ENCODE measurements at regions of chr2 and their contacts with region 1.

Region 1: DNA sequence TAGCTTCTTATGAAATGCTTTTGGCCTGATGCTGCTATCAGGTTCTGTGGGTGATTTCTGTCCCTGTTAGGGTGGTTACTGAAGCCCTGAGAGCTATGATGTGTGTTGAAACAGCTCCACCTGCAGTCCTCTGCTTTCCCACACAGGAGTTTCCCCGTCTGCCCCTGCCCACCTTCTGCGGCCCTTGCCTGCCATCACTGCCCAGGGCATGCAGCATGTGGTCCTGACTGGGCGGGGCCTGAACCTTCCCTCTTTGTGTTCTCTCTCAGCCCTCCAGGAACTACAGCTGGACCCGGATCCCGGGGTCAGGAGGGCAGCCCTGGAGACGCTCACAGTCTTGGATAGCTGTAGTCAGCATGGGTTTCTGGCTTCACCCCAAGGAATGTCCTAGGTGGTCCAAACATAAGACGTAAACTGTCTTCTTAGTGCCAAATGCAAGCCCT is 21.4 kb downstream of the HJURP start:
- DNase-seq: peak; percentile 93 to 97
- ATAC-seq: peak; percentile 83 to 92
- H3K4me3 ChIP-seq: no peak overlapping the region
- H3K27ac ChIP-seq: peak overlapping the region; percentile 91 to 93
- H3K4me1 ChIP-seq: peaks cover 73% of the 10 kb centered on the region
- CTCF ChIP-seq: peak; percentile 89
- EP300 ChIP-seq: peak; percentile 19 to 53; a peak in 2 of 5 replicates
- POLR2A ChIP-seq: no peak
- RAD21 ChIP-seq: peak; percentile 92 to 99

Region 2: DNA sequence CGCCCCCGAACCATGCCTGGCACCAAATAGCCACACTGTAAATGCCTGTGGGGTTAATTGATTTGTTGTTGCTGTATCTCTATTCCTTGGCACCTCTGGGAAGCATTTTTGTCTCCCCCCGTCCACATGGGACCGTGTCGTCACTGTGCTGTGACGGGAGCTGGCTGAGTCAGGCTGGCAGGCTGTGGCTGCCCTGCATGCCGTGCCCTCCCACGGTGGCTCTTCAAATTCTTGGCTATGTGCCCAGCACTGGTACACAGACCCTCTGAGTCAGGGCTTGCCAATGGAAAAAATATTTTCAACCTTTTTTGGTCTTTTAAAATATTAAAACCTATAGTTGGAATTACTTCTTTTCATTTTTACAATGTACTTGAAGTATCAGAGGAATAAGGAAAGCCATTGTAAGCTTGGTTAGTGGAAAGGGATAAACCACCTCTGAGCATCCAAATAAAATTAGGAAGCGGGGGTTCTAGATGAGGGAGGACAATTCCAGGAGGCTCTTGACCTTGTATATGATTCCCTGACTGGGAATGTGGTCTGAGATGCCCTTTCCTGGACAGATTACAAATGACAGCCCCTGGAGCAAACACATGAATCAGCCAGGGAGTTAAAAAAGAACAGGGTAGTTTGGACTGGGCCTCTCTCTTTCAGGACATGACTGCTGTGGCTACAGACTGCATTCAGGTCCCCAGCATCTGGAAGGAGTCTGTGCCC is 419.2 kb before region 1 on chr2:
- CTCF ChIA-PET with region 1: interaction called, 20 read pairs
- POLR2A ChIA-PET with region 1: interaction called, 4 read pairs
- DNase-seq: peak; percentile 87 to 96
- ATAC-seq: peak; percentile 77 to 84
- H3K4me3 ChIP-seq: peak overlapping the region; percentile 32
- H3K27ac ChIP-seq: peak overlapping the region; percentile 95 to 99
- H3K4me1 ChIP-seq: peaks cover 77% of the 10 kb centered on the region
- CTCF ChIP-seq: no peak
- EP300 ChIP-seq: peak; percentile 79 to 90; a peak in 4 of 5 replicates
- POLR2A ChIP-seq: no peak
- RAD21 ChIP-seq: no peak

Region 3: GRCh38 chr2:233449081-233449901 is 383.6 kb before region 1 on chr2:
- CTCF ChIA-PET with region 1: interaction called, 83 read pairs
- POLR2A ChIA-PET with region 1: interaction called, 11 read pairs
- DNase-seq: peak; percentile 68 to 77
- ATAC-seq: peak; percentile 67 to 74
- H3K4me3 ChIP-seq: no peak overlapping the region
- H3K27ac ChIP-seq: peak overlapping the region; percentile 93 to 94
- H3K4me1 ChIP-seq: peaks cover 62% of the 10 kb centered on the region
- CTCF ChIP-seq: peak; percentile 65
- EP300 ChIP-seq: no peak
- POLR2A ChIP-seq: no peak
- RAD21 ChIP-seq: peak; percentile 74 to 79

Region 4: GRCh38 chr2:233476651-233477547 is 356.0 kb before region 1 on chr2:
- CTCF ChIA-PET with region 1: interaction called, 12 read pairs
- POLR2A ChIA-PET with region 1: no interaction called
- DNase-seq: no peak
- ATAC-seq: peak in 1 of 2 experiments; percentile 2; a peak in 2 of 6 replicates
- H3K4me3 ChIP-seq: no peak overlapping the region
- H3K27ac ChIP-seq: peak overlapping the region; percentile 43 to 98; a peak in 4 of 6 replicates
- H3K4me1 ChIP-seq: peaks cover 12% of the 10 kb centered on the region; the same call in 2 of the 3 replicates
- CTCF ChIP-seq: no peak
- EP300 ChIP-seq: no peak
- POLR2A ChIP-seq: no peak
- RAD21 ChIP-seq: no peak

Region 5: GRCh38 chr2:233566141-233566960 is 266.5 kb before region 1 on chr2 and contains the start of gene USP40:
- CTCF ChIA-PET with region 1: interaction called, 10 read pairs
- POLR2A ChIA-PET with region 1: interaction called, 8 read pairs
- DNase-seq: peak; percentile 77 to 95
- ATAC-seq: peak; percentile 99 to 100
- H3K4me3 ChIP-seq: peak within 1 kb of the TSS; percentile 63
- H3K27ac ChIP-seq: peak within 1 kb of the TSS; percentile 97 to 100
- H3K4me1 ChIP-seq: peaks cover 17% of the 10 kb centered on the region
- CTCF ChIP-seq: no peak
- EP300 ChIP-seq: no peak
- POLR2A ChIP-seq: peak; percentile 81
- RAD21 ChIP-seq: peak in 1 of 2 experiments; percentile 16; a peak in 1 of 5 replicates
- polyA plus RNA-seq, gene USP40: 57.0 and 65.3 TPM in 2 replicates

Region 6: DNA sequence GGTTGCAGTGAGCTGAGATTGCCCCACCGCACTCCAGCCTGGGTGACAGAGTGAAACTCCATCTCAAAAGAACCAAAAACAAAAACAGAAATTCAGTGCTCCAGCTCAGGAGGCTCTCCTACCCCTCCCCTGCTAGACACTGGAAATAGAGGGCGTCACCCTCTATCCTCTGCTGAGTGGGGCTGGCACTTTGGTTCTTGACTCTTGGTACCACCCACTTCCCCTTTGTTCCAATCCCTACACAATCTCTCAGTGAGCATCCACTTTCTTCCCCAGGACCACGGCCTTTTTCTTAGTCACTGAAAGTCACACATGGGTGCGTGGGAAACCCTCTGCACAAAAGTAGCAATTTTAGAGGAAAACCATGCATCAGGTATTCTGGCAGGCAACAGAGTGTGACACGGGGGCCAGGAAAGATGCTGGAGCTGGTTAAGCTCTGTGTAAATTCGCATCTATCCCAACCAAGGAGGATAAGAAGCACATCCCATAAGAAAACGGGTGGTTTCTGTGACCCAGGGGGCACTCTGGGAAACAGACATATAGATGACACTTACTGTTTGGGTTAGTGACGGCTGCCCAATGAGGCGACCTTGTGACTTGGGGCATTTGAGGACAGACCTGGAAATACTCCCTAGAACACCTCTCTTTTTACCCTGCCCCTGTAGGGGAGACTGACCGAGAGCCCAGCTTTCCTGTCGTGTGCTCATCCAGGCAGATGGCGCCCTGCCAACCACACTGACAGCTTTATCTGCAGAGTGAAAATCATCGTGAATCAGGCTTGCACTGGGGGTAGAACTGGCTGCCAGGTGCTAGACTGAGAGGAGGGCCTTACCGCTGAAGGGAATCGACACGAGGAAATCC is 13.7 kb after region 1 on chr2:
- CTCF ChIA-PET with region 1: interaction called, 28 read pairs
- POLR2A ChIA-PET with region 1: no interaction called
- DNase-seq: no peak
- ATAC-seq: peak in 1 of 2 experiments; percentile 11; a peak in 2 of 6 replicates
- H3K4me3 ChIP-seq: no peak overlapping the region
- H3K27ac ChIP-seq: peak overlapping the region; percentile 10 to 83; a peak in 4 of 6 replicates
- H3K4me1 ChIP-seq: peaks cover 75% of the 10 kb centered on the region
- CTCF ChIP-seq: no peak
- EP300 ChIP-seq: no peak
- POLR2A ChIP-seq: no peak
- RAD21 ChIP-seq: no peak

Measured in A549 (cell line).